ENCODE measurements at regions of chr17 and their contacts with region 1.

Region 1: DNA sequence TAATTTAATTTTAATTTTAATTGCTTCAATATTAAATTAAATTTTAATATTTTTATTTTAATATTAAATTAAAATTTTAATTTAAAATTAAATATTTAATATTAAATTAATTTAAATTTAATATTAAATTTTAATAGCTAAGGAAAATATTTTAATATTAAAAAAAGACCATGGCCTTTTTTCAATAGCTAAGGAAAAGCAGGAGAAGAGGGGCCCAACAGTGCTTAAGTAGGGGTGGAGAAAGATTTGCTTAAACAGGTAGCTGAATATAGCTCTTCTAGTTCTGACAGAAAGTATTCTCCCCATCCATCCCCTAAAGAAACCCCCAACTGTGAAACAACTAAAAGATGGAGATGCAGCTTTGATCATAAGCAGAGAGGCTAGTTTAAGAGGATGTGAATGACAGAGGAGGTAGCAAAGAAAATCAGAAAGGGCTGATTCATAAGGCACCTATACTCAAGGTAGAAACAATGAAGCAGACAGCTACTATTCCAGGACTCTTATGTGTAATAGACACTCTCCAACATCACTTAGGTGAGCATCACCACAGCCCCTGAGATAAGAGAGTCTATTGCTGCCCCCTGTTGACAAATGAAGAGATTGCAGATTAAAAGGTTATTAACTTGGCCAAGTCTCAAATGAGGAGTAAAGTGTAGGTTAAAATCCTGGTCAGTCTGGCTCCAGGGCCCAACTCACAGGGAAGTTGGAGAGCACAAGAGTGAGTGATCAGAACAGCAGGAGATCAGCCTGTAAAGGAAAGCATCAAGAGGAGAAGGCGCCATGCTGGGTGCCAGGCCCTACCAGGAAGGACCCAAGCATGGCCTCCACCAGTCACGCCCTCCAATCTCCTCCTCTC is 7.8 kb upstream of the RNASEK start:
- DNase-seq: no peak
- H3K4me3 ChIP-seq: no peak overlapping the region
- H3K27ac ChIP-seq: no peak overlapping the region
- H3K27me3 ChIP-seq: no peaks in the 10 kb centered on the region
- CTCF ChIP-seq: peak; percentile 39 to 90 (median 76)

Region 2: GRCh38 chr17:6843241-6843880 is 161.3 kb before region 1 on chr17:
- intact Hi-C with region 1: loop called (anchors 5 kb)
- DNase-seq: no peak
- H3K4me3 ChIP-seq: peak overlapping the region in 3 of 59 donors; percentile 1 to 37 (median 10)
- H3K27ac ChIP-seq: no peak overlapping the region
- H3K27me3 ChIP-seq: peaks cover 0 to 45% (median 7%) of the 10 kb centered on the region in 45 donors
- CTCF ChIP-seq: peak; percentile 48 to 86 (median 70)

Region 3: GRCh38 chr17:6913608-6914443 is 90.8 kb before region 1 on chr17:
- intact Hi-C with region 1: loop called (anchors 2 to 5 kb)
- DNase-seq: peak; percentile 60 to 80 (median 68)
- H3K4me3 ChIP-seq: peak overlapping the region in 54 of 59 donors; percentile 9 to 64 (median 38)
- H3K27ac ChIP-seq: no peak overlapping the region
- H3K27me3 ChIP-seq: no peaks in the 10 kb centered on the region
- CTCF ChIP-seq: peak; percentile 43 to 92 (median 81)

Region 4: DNA sequence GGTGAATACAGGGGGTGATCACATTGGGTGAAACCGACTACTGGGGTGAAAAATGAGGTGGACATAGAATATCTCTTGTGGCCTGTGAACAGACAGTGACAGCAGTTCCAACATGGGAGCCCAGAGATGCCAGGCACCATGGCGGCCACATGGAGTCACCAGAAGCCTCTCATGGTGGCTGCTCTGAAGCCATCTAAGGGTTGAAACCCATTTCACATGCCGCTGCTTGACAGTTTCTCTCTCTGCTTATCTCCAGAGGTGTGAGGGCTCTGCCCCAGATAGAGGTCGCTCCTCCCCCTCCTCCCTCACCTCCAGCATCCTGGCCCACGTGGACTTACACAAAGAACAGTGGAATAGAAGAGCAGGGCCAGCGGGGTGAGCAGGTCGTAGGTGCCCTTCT is 1900.7 kb after region 1 on chr17:
- intact Hi-C with region 1: no loop called
- DNase-seq: no peak
- H3K4me3 ChIP-seq: no peak overlapping the region
- H3K27ac ChIP-seq: no peak overlapping the region
- H3K27me3 ChIP-seq: peaks cover 0 to 12% (median 0%) of the 10 kb centered on the region in 45 donors
- CTCF ChIP-seq: no peak